Dorsolateral prefrontal cortex (tissue), 120 donors: ENCODE measurements at regions of chr9 and their contacts with region 1.

Region 1: DNA sequence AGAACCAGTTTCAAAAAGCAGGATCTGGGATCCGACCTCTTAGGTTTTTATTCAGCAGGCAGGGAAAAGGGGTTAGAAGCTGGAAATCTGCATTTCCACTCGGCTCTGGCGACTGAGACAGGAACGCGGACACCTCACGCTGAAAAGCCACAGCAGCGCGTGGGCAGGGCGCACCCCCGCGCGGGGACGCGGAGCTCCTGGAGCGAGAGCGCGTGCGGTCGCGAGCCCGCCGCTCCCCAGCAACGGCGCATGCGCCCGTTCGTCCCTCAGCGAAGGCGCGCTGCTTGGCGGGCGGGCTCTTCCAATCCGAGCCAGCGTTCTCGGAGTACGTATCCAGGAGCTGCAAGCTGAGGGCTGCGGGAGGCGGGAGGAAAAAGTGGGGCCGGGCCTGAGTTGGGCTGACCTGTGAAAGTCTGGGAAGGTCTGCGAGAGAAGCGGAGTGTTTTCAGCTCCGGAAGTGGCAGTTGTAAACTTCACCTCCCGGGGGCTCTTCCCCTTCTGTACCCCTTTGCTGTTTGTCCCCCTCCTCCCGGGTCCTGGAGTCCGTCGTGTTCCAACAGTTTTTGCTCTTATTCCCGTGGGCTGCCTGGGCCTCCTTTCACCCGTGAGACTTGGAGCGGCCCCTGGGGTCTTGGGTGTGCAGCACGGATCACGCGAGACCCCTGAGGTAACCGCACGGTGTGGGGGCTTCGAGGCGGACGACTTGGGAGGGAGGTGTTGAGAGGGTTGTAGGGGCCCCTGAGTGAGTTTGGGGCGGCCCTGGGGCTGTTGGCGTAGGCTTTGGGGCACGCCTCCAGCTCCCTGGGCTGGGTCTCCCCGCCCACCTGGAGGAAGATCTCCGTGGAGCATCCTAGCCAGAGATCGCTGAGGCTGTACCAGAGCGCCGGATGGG is at the start of gene CCDC171:
- DNase-seq: peak; percentile 78 to 94 (median 92)
- H3K4me3 ChIP-seq: peak within 1 kb of the TSS; percentile 58 to 97 (median 86)
- H3K27ac ChIP-seq: peak within 1 kb of the TSS; percentile 23 to 98 (median 91)
- H3K27me3 ChIP-seq: no peaks in the 10 kb centered on the region
- CTCF ChIP-seq: peak in 26 of 56 donors; percentile 2 to 62 (median 25)
- total RNA-seq, gene CCDC171: 9.4 to 28.1 (median 15.9) TPM

Region 2: GRCh38 chr9:14722391-14723035 is 830.4 kb before region 1 on chr9 and contains the start of gene CER1:
- intact Hi-C with region 1: no loop called
- DNase-seq: peak in 1 of 10 donors; percentile 29
- H3K4me3 ChIP-seq: no peak within 1 kb of the TSS
- H3K27ac ChIP-seq: no peak within 1 kb of the TSS
- H3K27me3 ChIP-seq: peaks cover 0 to 6% (median 0%) of the 10 kb centered on the region in 45 donors
- CTCF ChIP-seq: no peak
- total RNA-seq, gene CER1: 0.25 to 1.0 (median 0.62) TPM in 38 of 120 experiments, not detected in the others

Region 3: DNA sequence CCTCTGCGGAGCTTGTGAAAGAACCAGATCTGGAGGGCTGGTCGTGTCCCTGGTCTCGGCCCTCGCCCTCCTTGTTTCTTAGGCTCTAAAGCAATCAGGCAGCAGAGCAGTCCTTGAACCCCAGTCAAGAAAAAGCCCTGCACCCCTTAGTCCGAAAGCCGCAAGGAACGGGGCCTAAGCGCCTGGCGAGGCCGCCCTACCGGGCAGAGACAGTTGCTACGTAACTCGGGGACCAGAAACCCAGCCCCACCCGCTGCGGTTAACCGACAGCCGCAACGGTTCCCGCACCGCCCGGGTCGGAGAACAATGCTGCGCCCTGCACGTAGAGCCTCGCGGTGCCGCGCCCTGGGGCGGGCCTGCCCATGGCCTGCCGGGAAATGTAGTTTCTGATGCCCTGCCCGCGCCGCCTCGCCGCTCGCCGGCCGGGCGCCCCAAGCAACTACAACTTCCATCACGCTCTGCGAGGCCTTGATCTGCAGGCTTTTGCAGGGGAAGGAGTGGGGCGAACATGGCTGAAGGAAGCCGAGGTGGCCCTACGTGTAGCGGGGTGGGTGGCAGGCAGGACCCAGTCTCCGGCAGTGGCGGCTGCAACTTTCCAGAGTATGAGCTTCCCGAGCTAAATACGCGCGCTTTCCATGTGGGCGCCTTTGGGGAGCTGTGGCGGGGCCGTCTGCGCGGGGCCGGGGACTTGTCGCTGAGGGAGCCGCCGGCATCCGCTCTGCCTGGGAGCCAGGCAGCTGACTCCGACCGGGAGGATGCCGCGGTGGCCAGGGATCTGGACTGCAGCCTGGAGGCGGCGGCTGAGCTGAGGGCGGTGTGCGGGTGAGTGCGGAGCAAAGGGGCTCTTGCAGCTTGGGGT is 130.3 kb before region 1 on chr9 and contains the start of gene SNAPC3:
- intact Hi-C with region 1: loop called (anchors 1 to 5 kb)
- DNase-seq: peak; percentile 90 to 98 (median 95)
- H3K4me3 ChIP-seq: peak within 1 kb of the TSS; percentile 73 to 99 (median 91)
- H3K27ac ChIP-seq: peak within 1 kb of the TSS; percentile 72 to 99 (median 94)
- H3K27me3 ChIP-seq: no peaks in the 10 kb centered on the region
- CTCF ChIP-seq: peak in 39 of 56 donors; percentile 8 to 61 (median 36)
- total RNA-seq, gene SNAPC3: 39.2 to 70.3 (median 53.8) TPM

Region 4: DNA sequence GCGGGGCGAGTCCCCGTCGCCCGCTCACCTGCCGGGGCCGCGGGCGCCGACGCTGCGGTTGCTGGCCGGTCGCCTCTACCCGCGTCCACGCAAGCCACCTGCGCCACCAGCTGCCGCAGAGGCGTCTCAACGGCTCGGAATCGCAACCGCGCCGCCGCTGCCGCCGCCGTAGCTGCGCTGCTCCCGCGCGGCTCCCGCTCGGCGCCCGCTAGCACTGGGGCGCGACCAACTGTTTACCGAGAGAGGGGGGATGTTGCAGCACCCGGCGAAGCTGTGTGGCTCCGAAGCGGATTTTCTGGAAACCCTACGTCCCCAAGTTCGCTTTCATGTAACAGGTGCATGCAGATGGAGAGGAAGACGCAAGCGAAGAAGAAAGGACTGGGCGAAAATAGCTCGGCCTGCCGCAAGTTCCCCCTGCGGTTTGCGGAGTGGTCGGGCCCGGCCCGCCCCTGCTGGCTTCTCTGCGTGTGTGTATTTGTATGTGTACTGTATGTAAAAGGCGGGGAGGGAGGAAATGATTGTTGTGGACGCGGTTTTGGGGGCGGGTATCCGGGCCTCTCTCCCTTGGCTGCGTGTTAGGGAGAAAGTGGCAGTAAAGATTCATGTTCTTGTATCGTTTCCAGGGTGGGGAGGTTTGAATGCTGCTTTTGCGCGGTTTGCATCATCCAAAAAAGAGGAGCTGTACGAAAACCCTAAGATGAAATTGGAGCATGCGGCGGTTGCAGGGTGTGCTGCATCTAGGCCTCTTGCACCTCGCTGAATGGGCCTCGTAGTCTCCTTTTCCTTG is 41.9 kb before region 1 on chr9 and contains the start of gene PSIP1:
- intact Hi-C with region 1: loop called (anchors 2 to 5 kb)
- DNase-seq: peak; percentile 59 to 85 (median 76)
- H3K4me3 ChIP-seq: peak within 1 kb of the TSS; percentile 64 to 100 (median 94)
- H3K27ac ChIP-seq: peak within 1 kb of the TSS; percentile 70 to 100 (median 98)
- H3K27me3 ChIP-seq: no peaks in the 10 kb centered on the region
- CTCF ChIP-seq: peak in 26 of 56 donors; percentile 5 to 39 (median 22)
- total RNA-seq, gene PSIP1: 113 to 233 (median 182) TPM

Region 5: DNA sequence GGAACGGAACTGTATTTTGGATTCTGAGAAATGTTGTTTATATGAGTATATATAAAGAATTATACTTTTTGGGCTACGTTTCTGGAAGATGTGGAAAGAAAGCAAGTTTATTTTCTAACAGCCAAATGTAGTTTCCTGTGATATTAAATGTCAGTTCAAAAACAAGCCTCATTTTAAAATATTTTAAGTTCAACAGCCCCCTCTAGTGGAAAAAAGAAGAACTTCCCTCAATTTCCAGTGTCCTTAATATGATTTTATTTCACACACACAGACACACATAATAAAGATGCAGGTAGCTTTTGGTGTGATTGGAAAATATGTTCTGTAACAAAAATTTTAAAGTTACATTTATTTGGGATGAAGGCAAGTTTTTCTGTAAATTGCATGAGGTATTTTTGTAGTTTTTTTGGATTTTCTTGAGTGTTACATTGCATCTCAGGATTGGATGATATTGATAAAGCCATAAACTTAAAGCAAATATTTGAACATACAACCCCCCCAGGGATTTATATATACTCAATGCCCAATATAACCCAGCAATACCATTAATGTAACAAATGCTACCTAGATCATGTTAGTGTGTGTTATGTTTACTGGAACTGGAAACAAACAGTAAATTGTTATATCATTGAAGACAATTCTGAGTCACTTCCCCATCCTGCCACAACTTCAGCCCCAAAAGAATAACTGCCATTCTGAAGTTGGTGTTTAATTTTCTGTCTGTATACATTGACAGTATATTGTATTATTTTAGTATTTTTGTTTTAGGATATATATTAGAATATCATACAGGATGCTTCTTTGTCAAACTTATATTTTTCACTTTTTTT is 54.0 kb after region 1 on chr9:
- intact Hi-C with region 1: loop called in 1 of 2 experiments (anchors 5 kb)
- DNase-seq: no peak
- H3K4me3 ChIP-seq: no peak overlapping the region
- H3K27ac ChIP-seq: no peak overlapping the region
- H3K27me3 ChIP-seq: no peaks in the 10 kb centered on the region
- CTCF ChIP-seq: peak; percentile 78 to 98 (median 86)

Region 6: DNA sequence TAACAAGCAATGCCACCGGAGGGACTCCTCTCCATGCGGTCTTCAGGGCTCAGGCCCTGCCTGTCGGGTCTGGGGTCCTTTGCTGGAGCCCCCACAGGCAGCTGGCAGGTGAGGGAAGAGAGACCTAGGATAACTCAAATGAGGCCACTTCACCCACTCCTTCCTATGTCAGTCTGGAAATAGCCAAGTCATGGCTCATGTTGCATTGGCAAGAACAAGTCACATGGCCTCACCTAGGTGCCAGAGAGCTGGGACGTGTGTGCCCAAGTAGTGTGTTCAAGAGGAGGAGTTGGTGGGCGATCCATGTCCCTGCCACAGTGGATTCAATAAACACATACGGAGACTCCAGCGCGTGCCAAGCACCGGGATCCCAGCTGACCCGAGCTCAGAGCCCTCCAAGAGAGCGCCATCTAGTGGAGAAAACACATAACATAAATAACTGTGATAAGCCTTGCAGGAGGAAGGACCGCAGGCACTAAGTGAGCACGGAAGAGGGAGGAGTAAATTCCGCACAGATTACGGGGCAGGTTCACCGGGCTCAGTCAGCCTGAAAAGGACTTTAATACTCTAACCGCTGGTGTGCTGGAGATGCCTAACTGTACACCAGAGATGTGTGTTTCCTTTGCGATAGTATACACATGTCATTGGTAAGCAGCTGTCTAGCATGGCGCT is 580.8 kb after region 1 on chr9:
- intact Hi-C with region 1: no loop called
- DNase-seq: peak in 3 of 10 donors; percentile 31 to 53 (median 48)
- H3K4me3 ChIP-seq: peak overlapping the region in 5 of 59 donors; percentile 17 to 51 (median 24)
- H3K27ac ChIP-seq: no peak overlapping the region
- H3K27me3 ChIP-seq: peaks cover 0 to 10% (median 0%) of the 10 kb centered on the region in 45 donors
- CTCF ChIP-seq: peak; percentile 44 to 81 (median 66)